ENCODE measurements at regions of chr4 and their contacts with region 1.

Region 1: DNA sequence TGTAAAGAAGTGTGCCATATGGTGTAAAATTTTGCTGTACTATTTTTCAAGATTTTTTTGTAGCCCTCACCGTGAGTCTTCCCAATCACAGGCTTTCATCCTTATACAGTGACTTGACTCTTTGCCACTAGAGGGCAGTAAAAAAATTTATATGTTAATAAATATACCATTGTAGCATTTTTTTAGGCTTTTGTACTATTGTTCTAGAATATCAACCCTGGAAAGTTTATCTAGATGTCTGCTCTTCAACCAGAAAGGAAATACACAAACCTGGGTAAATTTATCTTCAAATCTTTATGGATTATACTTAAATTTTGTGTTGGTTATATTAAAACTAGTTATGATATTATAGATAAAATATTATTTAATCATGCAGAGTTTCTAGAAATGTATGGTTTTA is 235.3 kb downstream of the TENM3 start:
- DNase-seq: peak; percentile 33
- CTCF ChIP-seq: peak; percentile 52

Region 2: GRCh38 chr4:182917182-182918043 is 438.9 kb after region 1 on chr4 and contains the start of gene DCTD:
- in situ Hi-C with region 1: loop called (anchors 25 kb)
- DNase-seq: peak; percentile 87
- CTCF ChIP-seq: peak; percentile 52

Measured in GM13977 (cell line).